ENCODE measurements at regions of chr2 and their contacts with region 1.

Region 1: GRCh38 chr2:186480991-186481390 is 5.1 kb upstream of the ZC3H15 start:
- DNase-seq: no peak
- ATAC-seq: no peak
- H3K4me3 ChIP-seq: no peak overlapping the region
- H3K27ac ChIP-seq: no peak overlapping the region
- H3K4me1 ChIP-seq: no peaks in the 10 kb centered on the region
- H3K27me3 ChIP-seq: no peaks in the 10 kb centered on the region
- CTCF ChIP-seq: no peak
- EP300 ChIP-seq: no peak
- POLR2A ChIP-seq: no peak
- RAD21 ChIP-seq: no peak

Region 2: GRCh38 chr2:186496401-186496800 is 15.4 kb after region 1 on chr2:
- CTCF ChIA-PET with region 1: no interaction called
- POLR2A ChIA-PET with region 1: interaction called, 5 read pairs
- RAD21 ChIA-PET with region 1: no interaction called
- SMC1A ChIA-PET with region 1: interaction called, 56 read pairs
- in situ Hi-C with region 1: no loop called
- intact Hi-C with region 1: no loop called
- DNase-seq: no peak
- ATAC-seq: no peak
- H3K4me3 ChIP-seq: no peak overlapping the region
- H3K27ac ChIP-seq: no peak overlapping the region
- H3K4me1 ChIP-seq: no peaks in the 10 kb centered on the region
- H3K27me3 ChIP-seq: no peaks in the 10 kb centered on the region
- CTCF ChIP-seq: no peak
- EP300 ChIP-seq: no peak
- POLR2A ChIP-seq: no peak
- RAD21 ChIP-seq: no peak

Measured in GM12878 (cell line).